WTC11 (cell line): ENCODE measurements at regions of chr10 and their contacts with region 1.

Region 1: GRCh38 chr10:61750929-61751471 is 88.3 kb downstream of the CABCOCO1 start:
- DNase-seq: peak; percentile 79
- ATAC-seq: peak; percentile 100
- H3K4me3 Mint-ChIP-seq: no peak overlapping the region
- H3K27ac Mint-ChIP-seq: no peak overlapping the region
- H3K4me1 Mint-ChIP-seq: peaks cover 47% of the 10 kb centered on the region
- H3K27me3 Mint-ChIP-seq: no peaks in the 10 kb centered on the region
- CTCF ChIP-seq: peak; percentile 76

Region 2: DNA sequence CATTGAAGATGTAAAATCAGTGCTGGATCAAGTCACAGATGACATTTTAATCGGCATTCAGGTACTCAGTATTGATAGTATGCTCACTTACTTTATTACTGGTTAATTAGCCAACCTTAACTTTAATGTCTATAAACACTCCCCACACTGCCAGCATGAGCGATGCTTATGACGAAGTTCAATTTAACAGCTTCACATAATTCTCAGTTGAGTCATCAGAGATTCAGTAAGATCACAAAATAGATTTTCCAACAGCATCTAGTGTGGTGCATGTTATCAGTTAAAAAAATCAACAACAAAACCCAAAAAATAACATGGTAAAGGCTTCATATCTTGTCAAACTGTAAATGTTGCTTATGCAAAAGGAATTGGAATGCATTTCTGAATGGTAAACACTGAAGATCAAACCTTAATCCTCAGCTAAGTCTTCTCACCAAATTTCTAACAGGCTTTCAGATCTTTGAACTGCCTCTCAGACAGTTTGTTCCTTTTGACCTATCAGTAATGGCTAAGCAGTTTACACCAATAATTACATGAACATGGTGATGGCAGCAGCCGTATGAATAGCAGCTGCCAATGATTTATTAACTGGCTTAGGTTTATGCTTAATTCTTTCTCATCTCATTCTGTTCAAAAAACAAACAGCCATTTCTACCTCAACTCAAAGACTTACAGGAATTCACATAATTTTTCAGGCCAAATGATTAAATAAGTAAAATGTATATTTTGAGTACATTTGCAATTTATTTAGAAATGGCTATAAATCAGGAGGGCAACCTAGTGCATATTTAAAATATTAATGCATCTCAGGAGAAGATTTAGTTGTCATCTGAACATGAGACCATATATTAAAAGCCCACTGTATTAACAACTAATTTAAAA is 10.2 kb after region 1 on chr10:
- CTCF ChIA-PET with region 1: interaction called, 11 read pairs
- POLR2A ChIA-PET with region 1: no interaction called
- DNase-seq: no peak
- ATAC-seq: no peak
- H3K4me3 Mint-ChIP-seq: no peak overlapping the region
- H3K27ac Mint-ChIP-seq: no peak overlapping the region
- H3K4me1 Mint-ChIP-seq: peaks cover 18% of the 10 kb centered on the region
- H3K27me3 Mint-ChIP-seq: no peaks in the 10 kb centered on the region; the same call in 1 of the 2 replicates
- CTCF ChIP-seq: no peak

Region 3: GRCh38 chr10:61766927-61767326 is 15.9 kb after region 1 on chr10:
- CTCF ChIA-PET with region 1: interaction called, 11 read pairs
- POLR2A ChIA-PET with region 1: no interaction called
- DNase-seq: no peak
- ATAC-seq: no peak
- H3K4me3 Mint-ChIP-seq: no peak overlapping the region
- H3K27ac Mint-ChIP-seq: no peak overlapping the region
- H3K4me1 Mint-ChIP-seq: peaks cover 16% of the 10 kb centered on the region
- H3K27me3 Mint-ChIP-seq: no peaks in the 10 kb centered on the region
- CTCF ChIP-seq: no peak

Region 4: DNA sequence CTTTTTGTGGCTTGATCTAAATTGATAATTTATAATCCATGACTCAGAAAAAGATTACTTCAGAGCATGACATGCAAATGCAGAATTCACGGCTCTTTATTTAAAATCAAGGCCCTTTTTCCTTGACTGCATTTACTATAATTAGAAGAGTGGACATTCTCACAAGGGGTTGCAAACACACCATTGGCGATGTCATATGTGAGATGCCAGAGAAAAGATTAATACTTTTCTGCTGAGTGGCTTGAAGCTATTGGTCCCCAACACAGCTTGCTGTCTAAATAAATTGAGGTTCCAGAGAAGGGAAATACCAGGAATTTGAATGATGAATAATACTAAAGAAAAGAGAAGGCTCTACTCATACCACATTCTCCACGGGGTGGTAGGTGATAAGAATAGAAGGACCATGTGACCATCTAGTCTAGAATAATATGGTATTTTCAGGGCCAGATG is 71.8 kb after region 1 on chr10:
- CTCF ChIA-PET with region 1: interaction called, 14 read pairs
- POLR2A ChIA-PET with region 1: no interaction called
- DNase-seq: no peak
- ATAC-seq: no peak
- H3K4me3 Mint-ChIP-seq: no peak overlapping the region
- H3K27ac Mint-ChIP-seq: no peak overlapping the region
- H3K4me1 Mint-ChIP-seq: peaks cover 7% of the 10 kb centered on the region
- H3K27me3 Mint-ChIP-seq: peaks cover 80% of the 10 kb centered on the region
- CTCF ChIP-seq: no peak

Region 5: DNA sequence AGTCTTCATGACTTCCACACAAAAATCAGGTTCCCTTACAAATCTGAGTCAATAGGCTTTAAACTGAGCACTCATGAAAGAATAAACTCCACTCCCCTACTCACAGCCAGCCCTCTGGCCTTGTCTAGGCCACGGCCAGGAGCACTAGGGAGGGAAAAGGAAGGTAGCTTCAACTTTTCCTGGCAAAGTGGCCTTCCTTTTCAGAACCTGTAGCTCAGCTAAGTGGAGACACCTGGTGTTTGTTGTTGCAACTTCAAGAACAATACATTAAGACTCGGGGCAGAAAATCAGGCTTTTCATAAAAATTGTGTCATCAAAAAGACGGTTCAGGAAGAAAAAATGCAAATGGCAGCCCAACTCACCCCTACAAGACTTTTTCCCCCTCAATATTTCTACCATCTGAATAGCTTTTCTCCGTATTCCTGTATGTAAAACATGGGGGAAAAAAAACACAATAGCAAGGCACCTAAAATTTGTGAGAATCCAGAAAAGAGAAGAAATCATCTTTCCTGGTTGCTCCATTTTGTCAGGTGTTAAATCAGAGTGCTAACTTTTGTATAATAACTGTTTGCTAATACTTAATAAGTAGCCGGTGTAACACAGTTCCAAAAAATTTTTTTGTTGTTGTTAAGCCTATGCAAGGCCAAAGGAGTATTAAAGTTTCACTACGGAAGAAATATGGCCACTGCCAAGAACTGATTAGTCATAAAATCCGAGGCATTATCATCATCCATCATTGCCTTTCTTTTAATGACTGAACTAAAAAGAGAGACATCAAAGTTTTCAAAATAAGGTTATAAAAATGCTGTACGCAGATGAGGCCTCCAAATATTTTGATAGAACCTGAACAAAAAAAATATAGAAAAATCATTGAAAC is 84.3 kb after region 1 on chr10:
- CTCF ChIA-PET with region 1: interaction called, 90 read pairs
- POLR2A ChIA-PET with region 1: interaction called, 3 read pairs
- DNase-seq: no peak
- ATAC-seq: peak; percentile 68
- H3K4me3 Mint-ChIP-seq: no peak overlapping the region
- H3K27ac Mint-ChIP-seq: no peak overlapping the region
- H3K4me1 Mint-ChIP-seq: peaks cover 15% of the 10 kb centered on the region
- H3K27me3 Mint-ChIP-seq: peaks cover 6% of the 10 kb centered on the region; the same call in 1 of the 2 replicates
- CTCF ChIP-seq: peak; percentile 33

Region 6: GRCh38 chr10:61896854-61897661 is 146.1 kb after region 1 on chr10:
- CTCF ChIA-PET with region 1: interaction called, 16 read pairs
- POLR2A ChIA-PET with region 1: no interaction called
- DNase-seq: peak; percentile 58
- ATAC-seq: peak; percentile 92
- H3K4me3 Mint-ChIP-seq: peak overlapping the region; percentile 85
- H3K27ac Mint-ChIP-seq: no peak overlapping the region
- H3K4me1 Mint-ChIP-seq: peaks cover 31% of the 10 kb centered on the region
- H3K27me3 Mint-ChIP-seq: peaks cover 41% of the 10 kb centered on the region
- CTCF ChIP-seq: peak; percentile 58

Region 7: DNA sequence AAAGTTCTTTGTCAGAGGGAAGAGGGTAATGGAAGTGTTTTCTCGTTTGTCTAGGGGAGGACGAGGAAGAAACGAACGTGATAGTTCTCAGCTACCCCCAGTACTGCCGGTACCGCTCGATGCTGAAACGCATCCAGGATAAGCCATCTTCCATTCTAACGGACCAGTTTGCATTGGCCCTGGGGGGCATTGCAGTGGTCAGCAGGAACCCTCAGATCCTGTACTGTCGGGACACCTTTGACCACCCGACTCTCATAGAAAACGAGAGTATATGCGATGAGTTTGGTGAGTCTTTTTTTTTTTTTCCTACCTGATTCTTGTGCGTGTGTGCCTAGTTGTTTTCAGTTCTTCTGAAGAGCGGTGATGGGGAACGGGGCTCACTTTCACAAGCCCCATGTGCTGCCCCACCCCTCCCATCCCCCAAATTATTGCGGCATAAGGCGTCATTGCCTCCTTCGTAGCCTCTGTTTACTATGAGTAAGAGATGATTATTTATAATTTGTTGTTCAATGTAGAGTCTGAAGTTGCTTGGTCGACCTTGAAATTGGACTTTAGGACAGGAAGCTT is 249.1 kb after region 1 on chr10:
- CTCF ChIA-PET with region 1: no interaction called
- POLR2A ChIA-PET with region 1: no interaction called
- DNase-seq: no peak
- ATAC-seq: no peak
- H3K4me3 Mint-ChIP-seq: no peak overlapping the region
- H3K27ac Mint-ChIP-seq: no peak overlapping the region
- H3K4me1 Mint-ChIP-seq: peaks cover 10% of the 10 kb centered on the region
- H3K27me3 Mint-ChIP-seq: no peaks in the 10 kb centered on the region
- CTCF ChIP-seq: no peak

Region 8: DNA sequence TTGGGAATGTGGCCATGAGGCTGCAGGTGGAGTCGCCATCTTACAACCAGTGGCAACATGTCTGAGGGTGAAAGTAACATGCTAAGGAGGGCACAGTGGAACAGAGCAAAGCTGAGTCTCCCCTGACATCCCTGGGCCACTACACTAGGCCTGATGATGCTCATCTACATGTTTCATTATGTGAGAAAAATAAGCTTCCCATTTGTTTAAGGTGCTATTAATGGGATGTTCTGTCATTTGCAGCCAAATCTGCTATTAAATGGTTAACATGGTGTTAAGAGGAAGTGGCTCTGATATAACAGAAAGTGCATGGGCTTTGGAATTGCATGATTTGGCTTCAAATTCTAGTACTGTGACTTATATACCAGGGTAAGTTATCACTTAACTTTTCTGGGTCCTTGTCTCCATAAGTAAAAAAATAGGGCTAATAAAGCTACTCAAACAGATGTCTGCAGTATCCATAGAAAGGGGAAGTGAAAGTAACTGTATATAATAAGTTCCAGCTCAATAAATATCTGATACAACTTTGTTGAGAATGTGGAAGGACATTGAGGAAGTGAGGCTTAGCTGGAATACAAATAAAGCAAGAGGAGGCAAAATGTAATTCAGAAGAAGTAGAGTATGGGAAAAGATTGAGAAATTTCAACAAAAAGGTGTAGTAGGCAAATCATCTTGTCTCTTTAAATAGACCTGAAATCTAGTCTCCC is 358.7 kb after region 1 on chr10:
- CTCF ChIA-PET with region 1: no interaction called
- POLR2A ChIA-PET with region 1: no interaction called
- DNase-seq: no peak
- ATAC-seq: no peak
- H3K4me3 Mint-ChIP-seq: no peak overlapping the region
- H3K27ac Mint-ChIP-seq: no peak overlapping the region
- H3K4me1 Mint-ChIP-seq: no peaks in the 10 kb centered on the region; the same call in 1 of the 2 replicates
- H3K27me3 Mint-ChIP-seq: no peaks in the 10 kb centered on the region
- CTCF ChIP-seq: no peak